ENCODE measurements at regions of chr9 and their contacts with region 1.

Region 1: DNA sequence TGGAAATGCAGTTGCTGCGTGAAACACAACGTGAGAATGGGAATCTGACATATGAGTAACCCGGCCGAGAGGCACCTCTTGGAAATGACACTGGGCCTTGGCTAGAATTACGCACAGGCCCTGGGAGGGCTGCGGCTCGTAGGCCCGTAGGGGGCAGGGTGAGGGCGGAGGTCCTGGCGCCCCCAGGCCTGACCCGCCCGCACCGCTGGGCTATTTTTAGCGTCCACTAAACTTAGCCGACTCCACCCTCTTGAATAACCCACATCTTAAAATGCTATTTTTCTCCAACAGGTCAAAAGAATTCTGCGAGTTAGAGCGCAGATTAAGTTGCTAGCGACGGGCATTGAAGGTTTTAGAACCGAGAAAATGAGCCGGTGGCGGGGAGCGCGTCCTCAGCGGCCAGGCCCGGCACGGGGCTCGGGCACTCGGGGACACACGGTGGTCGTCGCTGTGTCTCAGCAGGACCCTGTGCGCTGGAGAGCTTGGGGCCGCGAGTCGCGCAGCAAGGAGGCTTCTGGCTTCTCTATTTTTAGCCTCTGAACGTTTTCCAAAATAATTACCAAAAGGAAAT is 168.5 kb downstream of the AUH start:
- DNase-seq: peak; percentile 78
- ATAC-seq: peak; percentile 76
- H3K4me3 ChIP-seq: peak overlapping the region; percentile 33 to 43
- H3K27ac ChIP-seq: 0 out of 2 replicates have a peak overlapping the region, but pooled peaks have one; percentile 17
- H3K4me1 ChIP-seq: peaks cover 7% of the 10 kb centered on the region
- H3K27me3 ChIP-seq: no peaks in the 10 kb centered on the region
- CTCF ChIP-seq: no peak

Region 2: DNA sequence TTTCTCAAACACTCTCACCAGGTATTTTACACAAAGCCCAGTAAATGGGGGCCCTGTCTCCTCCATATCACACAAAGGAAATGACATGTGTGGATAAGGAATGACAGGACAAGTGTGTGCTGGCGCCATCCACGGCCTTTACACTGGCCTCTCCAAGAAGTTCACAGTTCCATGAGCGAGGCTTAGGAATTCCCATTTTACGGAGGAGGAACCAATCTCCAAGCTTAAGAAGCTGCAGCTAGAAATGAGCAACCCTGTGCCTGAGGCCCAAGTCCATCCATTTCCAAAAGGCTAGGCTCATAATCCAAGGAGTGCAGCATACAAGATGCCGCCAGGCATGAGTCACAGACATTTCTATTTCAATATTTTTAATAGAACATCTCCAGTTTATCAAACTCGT is 34.9 kb before region 1 on chr9:
- CTCF ChIA-PET with region 1: interaction called, 14 read pairs
- POLR2A ChIA-PET with region 1: no interaction called
- in situ Hi-C with region 1: no loop called
- intact Hi-C with region 1: no loop called
- DNase-seq: no peak
- ATAC-seq: no peak
- H3K4me3 ChIP-seq: no peak overlapping the region
- H3K27ac ChIP-seq: no peak overlapping the region
- H3K4me1 ChIP-seq: 0 out of 2 replicates have a peak, but pooled peaks cover 3% of the 10 kb centered on the region
- H3K27me3 ChIP-seq: no peaks in the 10 kb centered on the region
- CTCF ChIP-seq: no peak

Region 3: GRCh38 chr9:91256235-91256634 is 63.1 kb after region 1 on chr9:
- CTCF ChIA-PET with region 1: no interaction called
- POLR2A ChIA-PET with region 1: interaction called, 10 read pairs
- in situ Hi-C with region 1: no loop called
- intact Hi-C with region 1: no loop called
- DNase-seq: no peak
- ATAC-seq: no peak
- H3K4me3 ChIP-seq: no peak overlapping the region
- H3K27ac ChIP-seq: no peak overlapping the region
- H3K4me1 ChIP-seq: no peaks in the 10 kb centered on the region
- H3K27me3 ChIP-seq: no peaks in the 10 kb centered on the region
- CTCF ChIP-seq: no peak

Measured in Panc1 (cell line).